GM13977 (cell line): ENCODE measurements at regions of chr2 and their contacts with region 1.

Region 1: GRCh38 chr2:69914170-69914960 is 544 bp upstream of the MXD1 start:
- DNase-seq: peak; percentile 98
- CTCF ChIP-seq: peak; percentile 53

Region 2: DNA sequence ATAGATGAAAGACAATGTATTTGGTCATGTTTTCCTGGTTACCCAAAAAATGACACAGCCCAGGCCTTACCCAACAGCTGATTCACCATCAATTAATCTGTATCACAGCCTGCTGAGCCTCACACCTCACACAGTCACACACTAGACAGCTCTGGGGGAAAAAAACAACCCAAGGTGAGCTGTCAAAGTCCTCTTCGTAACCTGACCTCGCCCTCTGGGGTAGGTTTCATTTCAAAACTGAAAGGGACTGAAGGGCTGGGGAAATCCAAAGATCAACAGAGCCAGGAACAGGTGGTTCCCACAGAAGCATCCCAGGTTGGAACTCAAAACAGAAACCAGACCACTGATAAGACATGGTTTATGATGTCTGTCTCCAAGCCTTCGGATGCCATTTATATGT is 154.7 kb after region 1 on chr2:
- in situ Hi-C with region 1: loop called (anchors 10 kb)
- DNase-seq: peak; percentile 58
- CTCF ChIP-seq: no peak

Region 3: DNA sequence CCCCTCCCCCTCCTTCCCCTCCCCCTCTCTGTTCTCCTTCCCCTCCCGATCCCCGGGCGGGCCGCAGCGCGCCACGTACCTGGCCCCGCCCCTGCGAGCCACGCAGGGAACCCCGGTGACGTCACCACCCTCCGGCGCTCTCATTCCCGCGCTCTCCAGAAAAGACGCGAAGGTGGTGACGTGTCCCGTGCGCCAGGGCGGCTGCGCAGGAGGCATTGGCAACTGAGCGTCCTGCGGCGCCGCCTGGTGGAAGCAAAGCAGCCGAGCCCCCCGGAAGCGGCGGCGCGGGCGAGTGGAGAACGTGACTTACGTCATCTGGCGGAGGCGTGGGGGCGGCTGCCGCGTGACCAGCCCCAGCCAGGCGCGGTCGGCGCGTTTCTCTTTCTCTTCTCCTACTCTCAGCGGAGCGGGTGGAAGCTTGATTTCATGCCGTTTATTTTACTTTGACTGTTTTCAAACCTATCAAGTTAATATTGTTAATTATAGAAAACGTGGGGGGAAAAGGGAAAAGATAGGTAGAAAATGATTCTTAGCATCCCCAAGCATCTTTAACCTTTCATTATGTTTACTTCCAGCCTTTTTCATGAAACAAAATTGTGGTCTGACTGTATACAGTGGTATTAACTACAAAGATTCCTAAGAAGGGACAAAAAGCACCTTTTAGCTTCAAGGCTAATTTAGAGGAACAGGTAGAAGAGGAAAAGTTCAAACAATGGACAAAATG is 228.4 kb after region 1 on chr2:
- in situ Hi-C with region 1: loop called (anchors 10 kb)
- DNase-seq: peak; percentile 97
- CTCF ChIP-seq: peak; percentile 99

Region 4: GRCh38 chr2:70283500-70284191 is 369.3 kb after region 1 on chr2:
- in situ Hi-C with region 1: loop called (anchors 25 kb)
- DNase-seq: no peak
- CTCF ChIP-seq: no peak

Region 5: GRCh38 chr2:70647873-70648481 is 733.6 kb after region 1 on chr2:
- in situ Hi-C with region 1: loop called (anchors 25 kb)
- DNase-seq: peak; percentile 58
- CTCF ChIP-seq: peak; percentile 97